ENCODE measurements at regions of chr2 and their contacts with region 1.

Region 1: DNA sequence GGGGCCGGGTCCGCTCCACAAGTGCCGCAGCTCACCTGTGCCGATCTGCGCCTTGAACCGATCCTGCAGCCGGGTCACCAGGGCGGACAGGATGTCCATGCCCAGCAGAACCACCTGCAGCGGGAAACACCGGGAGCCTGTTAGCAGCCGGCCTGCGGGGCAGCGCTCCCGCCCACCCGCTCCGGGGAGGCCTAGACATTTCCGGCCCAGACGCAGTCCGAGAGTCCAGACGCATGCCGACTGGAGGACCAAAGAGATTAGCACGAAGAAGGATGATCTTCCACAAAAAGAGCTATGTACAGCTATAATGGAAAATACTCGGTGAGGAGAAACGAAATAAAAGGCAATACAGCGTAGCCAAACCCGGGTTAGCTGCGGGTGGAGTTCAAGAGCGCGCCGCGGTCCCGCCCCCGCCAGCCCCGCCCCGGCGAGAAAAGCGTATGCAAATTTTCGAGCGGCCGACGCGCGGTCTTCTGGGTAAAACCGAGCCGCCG is 421 bp upstream of the RNU4ATAC start:
- DNase-seq: peak; percentile 66 to 84
- ATAC-seq: peak; percentile 86
- H3K4me3 ChIP-seq: peak overlapping the region; percentile 61
- H3K27ac ChIP-seq: peak overlapping the region; percentile 91 to 99
- H3K4me1 ChIP-seq: peaks cover 28% of the 10 kb centered on the region
- CTCF ChIP-seq: no peak
- EP300 ChIP-seq: no peak
- POLR2A ChIP-seq: peak; percentile 42
- RAD21 ChIP-seq: no peak

Region 2: DNA sequence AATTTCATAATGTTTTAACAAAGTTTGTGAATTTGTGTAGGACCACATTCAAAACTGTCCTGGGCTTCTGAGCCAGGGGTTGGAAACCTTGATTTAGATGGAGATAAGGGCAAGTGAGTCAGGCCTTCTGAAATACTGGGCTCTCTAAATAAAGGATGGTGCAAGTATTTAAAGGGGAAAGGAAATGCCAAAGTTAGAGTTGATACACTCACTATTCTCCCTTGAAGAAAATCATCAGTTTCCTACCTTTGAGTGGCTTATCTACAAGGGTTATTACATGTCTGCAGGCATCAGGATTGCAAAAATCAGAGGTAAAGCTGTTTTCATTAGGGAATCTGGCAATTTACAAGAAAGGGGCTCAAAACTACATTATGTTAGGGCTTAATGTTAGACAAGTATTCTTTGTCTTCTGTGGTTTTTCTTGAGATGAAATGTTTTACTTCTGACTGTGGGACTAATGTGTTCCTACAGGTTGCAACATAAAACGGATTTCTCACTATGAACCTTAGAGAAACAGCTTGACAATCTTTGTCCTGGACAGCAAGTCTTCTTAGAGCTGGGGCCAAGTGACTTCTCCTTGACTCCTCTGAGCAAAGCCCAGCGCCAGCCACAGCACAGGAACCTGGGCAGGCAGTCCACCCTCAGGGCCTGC is 31.5 kb after region 1 on chr2:
- CTCF ChIA-PET with region 1: interaction called, 4 read pairs
- POLR2A ChIA-PET with region 1: interaction called, 12 read pairs
- DNase-seq: no peak
- ATAC-seq: peak in 1 of 2 experiments; percentile 40; a peak in 2 of 6 replicates
- H3K4me3 ChIP-seq: no peak overlapping the region
- H3K27ac ChIP-seq: no peak overlapping the region
- H3K4me1 ChIP-seq: peaks cover 18% of the 10 kb centered on the region; the same call in 2 of the 3 replicates
- CTCF ChIP-seq: no peak
- EP300 ChIP-seq: no peak
- POLR2A ChIP-seq: no peak
- RAD21 ChIP-seq: no peak

Region 3: DNA sequence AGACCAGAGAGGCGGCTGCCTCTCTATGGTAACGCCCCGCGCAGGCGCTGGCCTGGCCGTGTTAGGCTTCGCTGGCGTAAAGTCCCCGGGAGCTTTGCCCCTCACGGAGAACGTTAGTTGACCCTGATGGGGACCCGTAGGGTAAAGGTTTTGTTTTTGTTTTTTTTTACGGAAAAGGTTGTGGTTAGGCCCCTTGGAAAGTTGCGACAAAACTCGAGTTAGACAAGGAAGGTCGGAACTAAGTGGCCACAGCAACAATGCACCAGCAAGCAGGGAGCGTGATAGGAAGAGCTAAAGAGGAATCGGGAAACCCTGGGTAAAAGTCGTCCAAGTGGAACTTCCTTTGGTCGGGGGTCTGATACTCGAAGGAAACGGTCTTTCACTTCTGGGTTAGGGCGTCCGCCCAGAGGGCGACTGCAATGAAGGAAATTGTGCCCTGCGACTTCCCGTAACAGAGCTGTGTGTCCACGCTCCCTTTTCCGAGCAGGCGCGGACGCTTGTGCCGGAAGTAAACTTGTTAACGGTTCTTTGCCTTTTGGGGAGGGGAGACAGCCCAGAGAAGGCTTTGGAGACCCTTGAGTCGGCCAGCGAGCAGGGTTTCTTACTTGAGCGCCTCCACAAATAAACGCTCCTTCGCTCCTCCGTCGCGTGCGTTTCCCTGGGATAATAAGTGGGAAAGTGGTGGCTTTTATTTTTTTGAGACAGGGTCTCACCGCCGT is 119.5 kb after region 1 on chr2:
- CTCF ChIA-PET with region 1: no interaction called
- POLR2A ChIA-PET with region 1: interaction called, 118 read pairs
- DNase-seq: peak; percentile 96 to 98
- ATAC-seq: peak; percentile 96 to 98
- H3K4me3 ChIP-seq: peak overlapping the region; percentile 73
- H3K27ac ChIP-seq: peak overlapping the region; percentile 91 to 93
- H3K4me1 ChIP-seq: peaks cover 20% of the 10 kb centered on the region
- CTCF ChIP-seq: no peak
- EP300 ChIP-seq: no peak
- POLR2A ChIP-seq: peak; percentile 32
- RAD21 ChIP-seq: no peak

Region 4: DNA sequence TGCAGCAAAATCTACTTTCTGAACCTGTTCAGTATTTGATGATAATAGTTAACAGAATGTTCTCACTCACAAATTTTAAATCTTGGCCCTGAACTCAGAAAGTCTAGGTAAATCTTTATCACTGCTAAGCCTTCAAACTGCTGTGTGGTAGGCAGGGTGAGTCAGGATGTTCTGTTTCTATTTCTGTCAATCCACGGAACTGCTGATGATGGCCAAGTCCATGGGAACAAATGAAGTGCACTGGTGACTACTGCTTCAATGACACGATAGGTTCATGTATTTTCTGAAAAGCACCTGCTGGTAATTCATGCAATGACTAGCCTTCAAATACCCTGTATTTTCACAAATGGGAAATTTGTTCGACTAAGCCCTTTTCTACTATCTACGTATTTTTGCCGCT is 192.2 kb after region 1 on chr2:
- CTCF ChIA-PET with region 1: interaction called, 29 read pairs
- POLR2A ChIA-PET with region 1: interaction called, 11 read pairs
- DNase-seq: peak; percentile 48 to 63
- ATAC-seq: peak; percentile 65 to 90
- H3K4me3 ChIP-seq: no peak overlapping the region
- H3K27ac ChIP-seq: peak overlapping the region; percentile 36 to 38; a peak in 3 of 6 replicates
- H3K4me1 ChIP-seq: peaks cover 17% of the 10 kb centered on the region
- CTCF ChIP-seq: no peak
- EP300 ChIP-seq: no peak
- POLR2A ChIP-seq: no peak
- RAD21 ChIP-seq: no peak

Measured in A549 (cell line).